Endothelial cell of umbilical vein (primary cell): ENCODE measurements at regions of chr12 and their contacts with region 1.

Region 1: DNA sequence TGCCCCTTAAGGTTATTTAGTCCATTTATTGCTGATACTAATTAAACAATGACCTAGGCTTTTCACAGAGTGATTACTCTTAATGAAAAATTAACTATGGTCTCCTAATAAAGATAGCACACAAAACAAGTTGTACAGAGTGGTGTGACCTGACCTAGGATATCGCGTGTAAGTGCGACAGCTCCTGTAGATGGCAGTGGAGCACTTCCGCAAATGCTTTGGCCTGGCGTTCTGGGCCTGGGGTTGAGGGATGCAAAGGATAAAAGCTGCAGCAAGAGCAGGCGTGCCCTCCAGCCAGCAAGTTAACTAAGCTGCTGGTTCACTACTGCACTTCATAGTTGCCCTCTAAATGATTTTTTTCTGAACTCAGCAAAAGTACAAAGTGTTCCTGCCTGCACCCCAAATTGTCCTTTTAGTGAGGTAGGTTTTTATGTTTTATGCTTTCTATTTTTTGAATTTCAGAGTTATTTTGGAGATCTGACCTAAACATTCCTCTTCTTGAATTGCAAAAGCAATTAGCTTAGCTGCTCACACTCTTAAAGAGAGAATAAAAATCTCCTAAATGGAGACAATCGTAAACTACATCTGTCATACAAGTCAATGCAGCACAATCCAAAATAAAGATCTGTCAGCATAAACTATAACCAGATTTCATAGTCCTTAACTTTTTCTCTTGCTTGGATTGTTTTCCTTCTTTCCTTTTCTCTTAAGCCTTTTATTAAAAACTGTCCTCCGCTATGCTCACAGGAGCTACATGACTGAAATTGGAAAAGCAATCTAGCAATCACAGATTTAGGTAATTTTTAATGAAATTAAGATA is 379.6 kb downstream of the LRIG3 start:
- DNase-seq: peak; percentile 89
- H3K4me3 ChIP-seq: no peak overlapping the region
- H3K27ac ChIP-seq: no peak overlapping the region
- H3K4me1 ChIP-seq: peaks cover 10% of the 10 kb centered on the region
- H3K27me3 ChIP-seq: no peaks in the 10 kb centered on the region
- CTCF ChIP-seq: peak; percentile 76 to 79
- POLR2A ChIP-seq: no peak

Region 2: DNA sequence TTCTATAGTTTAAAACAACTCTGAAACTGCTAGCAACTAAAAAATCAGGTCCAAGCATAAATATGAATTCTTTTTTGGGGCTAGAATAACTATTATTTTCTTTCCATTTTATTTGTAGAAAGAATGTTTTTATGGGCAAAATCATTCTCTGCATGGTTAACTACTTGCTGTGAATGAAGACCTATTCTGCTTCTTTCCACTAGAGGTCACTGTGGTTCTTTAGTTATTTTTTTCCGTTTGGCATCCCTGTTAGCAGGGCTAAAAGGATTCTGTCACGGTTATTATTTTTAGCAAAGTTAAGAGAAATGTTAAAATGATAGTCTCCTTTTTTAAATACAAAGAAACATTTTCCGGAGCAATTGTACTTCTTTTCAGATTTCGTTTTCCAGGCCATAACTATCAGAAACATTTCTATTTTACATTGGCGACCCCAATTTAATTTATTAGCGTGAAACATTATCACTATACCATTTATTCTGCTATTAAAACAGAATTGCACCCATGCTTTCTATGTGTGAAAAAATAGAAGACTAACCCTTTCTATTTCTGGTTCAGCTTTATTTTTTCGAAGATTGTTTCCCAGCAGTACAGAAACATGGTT is 194.6 kb before region 1 on chr12:
- CTCF ChIA-PET with region 1: interaction called, 6 read pairs
- POLR2A ChIA-PET with region 1: no interaction called
- dilution Hi-C with region 1: no loop called
- intact Hi-C with region 1: loop called (anchors 1 kb)
- DNase-seq: peak; percentile 58
- H3K4me3 ChIP-seq: no peak overlapping the region
- H3K27ac ChIP-seq: no peak overlapping the region
- H3K4me1 ChIP-seq: peaks cover 22% of the 10 kb centered on the region
- H3K27me3 ChIP-seq: no peaks in the 10 kb centered on the region
- CTCF ChIP-seq: peak; percentile 34 to 47
- POLR2A ChIP-seq: no peak

Region 3: DNA sequence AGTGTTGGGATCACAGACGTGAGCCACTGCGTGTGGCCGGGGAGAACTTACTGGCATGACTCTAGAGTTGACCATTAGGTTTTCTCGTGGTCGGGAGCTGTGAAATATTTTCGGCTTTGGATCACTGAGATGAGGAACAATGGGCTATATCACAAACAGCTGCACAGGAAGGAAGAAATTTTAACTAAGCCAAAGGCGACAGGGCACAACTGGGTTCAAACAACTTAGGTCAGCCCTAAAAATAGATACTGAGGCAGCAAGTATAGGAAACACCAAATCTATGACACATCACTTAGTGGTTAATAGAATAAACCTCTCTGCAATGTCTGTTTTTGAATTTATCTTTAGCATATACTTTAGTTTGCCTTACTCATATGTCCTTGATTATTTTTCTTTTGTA is 216.7 kb after region 1 on chr12:
- CTCF ChIA-PET with region 1: interaction called, 9 read pairs
- POLR2A ChIA-PET with region 1: no interaction called
- dilution Hi-C with region 1: no loop called
- intact Hi-C with region 1: loop called (anchors 5 kb)
- DNase-seq: peak; percentile 89
- H3K4me3 ChIP-seq: no peak overlapping the region
- H3K27ac ChIP-seq: peak overlapping the region; percentile 87
- H3K4me1 ChIP-seq: peaks cover 16% of the 10 kb centered on the region
- H3K27me3 ChIP-seq: no peaks in the 10 kb centered on the region
- CTCF ChIP-seq: no peak
- POLR2A ChIP-seq: no peak

Region 4: GRCh38 chr12:58860056-58860787 is 319.5 kb after region 1 on chr12:
- CTCF ChIA-PET with region 1: interaction called, 5 read pairs
- POLR2A ChIA-PET with region 1: no interaction called
- dilution Hi-C with region 1: no loop called
- intact Hi-C with region 1: loop called (anchors 10 kb)
- DNase-seq: no peak
- H3K4me3 ChIP-seq: no peak overlapping the region
- H3K27ac ChIP-seq: no peak overlapping the region
- H3K4me1 ChIP-seq: no peaks in the 10 kb centered on the region
- H3K27me3 ChIP-seq: no peaks in the 10 kb centered on the region
- CTCF ChIP-seq: no peak
- POLR2A ChIP-seq: no peak

Region 5: DNA sequence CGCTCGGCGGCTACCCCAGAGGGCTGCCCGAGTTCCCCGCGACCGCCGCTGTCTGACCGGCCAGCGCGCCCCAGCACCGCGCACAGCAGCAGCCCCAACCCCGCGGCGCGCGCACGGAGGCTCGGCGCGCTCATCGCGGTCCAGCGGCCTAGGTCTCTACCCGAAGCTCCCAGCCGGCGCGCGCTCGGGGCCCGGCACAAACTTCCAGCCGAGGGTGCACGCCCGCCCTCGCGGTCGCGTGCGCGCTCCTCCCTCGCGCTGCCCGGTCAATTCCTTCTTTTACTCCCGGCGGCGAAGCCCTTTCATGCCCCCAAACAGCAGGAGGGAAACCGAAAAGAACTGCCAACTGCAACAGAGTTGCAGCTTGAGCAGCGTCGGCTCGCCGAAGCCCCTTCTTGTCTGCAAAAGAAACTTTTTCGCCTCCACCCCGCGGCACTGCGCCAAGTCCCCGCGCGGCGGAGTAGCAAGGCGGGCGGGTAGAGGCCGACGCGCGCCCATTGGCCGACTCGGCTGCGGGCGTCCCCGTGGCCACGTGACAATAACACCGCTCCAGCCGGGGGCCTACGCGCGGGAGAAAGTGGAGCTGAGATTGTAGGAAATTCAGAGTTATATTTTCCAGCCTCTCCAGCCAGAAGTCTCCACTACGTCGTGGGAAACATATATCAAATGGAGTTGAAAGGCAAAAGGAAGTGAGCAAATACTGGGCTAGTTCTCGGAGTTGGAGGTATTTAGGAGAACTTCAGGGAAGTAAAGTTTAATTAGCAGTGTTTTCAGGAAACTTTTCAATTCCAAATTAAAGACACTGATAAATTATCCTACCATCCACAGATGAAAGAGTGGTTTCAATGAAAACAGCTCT is 379.6 kb after region 1 on chr12 and contains the start of gene LRIG3:
- CTCF ChIA-PET with region 1: interaction called, 24 read pairs
- POLR2A ChIA-PET with region 1: no interaction called
- dilution Hi-C with region 1: no loop called
- intact Hi-C with region 1: loop called (anchors 1 kb)
- DNase-seq: peak; percentile 99
- H3K4me3 ChIP-seq: peak within 1 kb of the TSS; percentile 89 to 99 (median 96)
- H3K27ac ChIP-seq: peak within 1 kb of the TSS; percentile 91
- H3K4me1 ChIP-seq: peaks cover 43% of the 10 kb centered on the region
- H3K27me3 ChIP-seq: no peaks in the 10 kb centered on the region
- CTCF ChIP-seq: no peak
- POLR2A ChIP-seq: no peak
- total RNA-seq, gene LRIG3: 42.9 and 55.5 TPM in 2 replicates

Region 6: GRCh38 chr12:59142175-59142790 is 601.6 kb after region 1 on chr12:
- CTCF ChIA-PET with region 1: interaction called, 12 read pairs
- POLR2A ChIA-PET with region 1: no interaction called
- dilution Hi-C with region 1: no loop called
- intact Hi-C with region 1: no loop called
- DNase-seq: no peak
- H3K4me3 ChIP-seq: no peak overlapping the region
- H3K27ac ChIP-seq: no peak overlapping the region
- H3K4me1 ChIP-seq: no peaks in the 10 kb centered on the region
- H3K27me3 ChIP-seq: no peaks in the 10 kb centered on the region
- CTCF ChIP-seq: no peak
- POLR2A ChIP-seq: no peak